Activated CD4-positive, alpha-beta T cell treated with anti-CD3 and anti-CD28 coated beads for 36 hours (primary cell): ENCODE measurements at regions of chrX and their contacts with region 1.

Region 1: DNA sequence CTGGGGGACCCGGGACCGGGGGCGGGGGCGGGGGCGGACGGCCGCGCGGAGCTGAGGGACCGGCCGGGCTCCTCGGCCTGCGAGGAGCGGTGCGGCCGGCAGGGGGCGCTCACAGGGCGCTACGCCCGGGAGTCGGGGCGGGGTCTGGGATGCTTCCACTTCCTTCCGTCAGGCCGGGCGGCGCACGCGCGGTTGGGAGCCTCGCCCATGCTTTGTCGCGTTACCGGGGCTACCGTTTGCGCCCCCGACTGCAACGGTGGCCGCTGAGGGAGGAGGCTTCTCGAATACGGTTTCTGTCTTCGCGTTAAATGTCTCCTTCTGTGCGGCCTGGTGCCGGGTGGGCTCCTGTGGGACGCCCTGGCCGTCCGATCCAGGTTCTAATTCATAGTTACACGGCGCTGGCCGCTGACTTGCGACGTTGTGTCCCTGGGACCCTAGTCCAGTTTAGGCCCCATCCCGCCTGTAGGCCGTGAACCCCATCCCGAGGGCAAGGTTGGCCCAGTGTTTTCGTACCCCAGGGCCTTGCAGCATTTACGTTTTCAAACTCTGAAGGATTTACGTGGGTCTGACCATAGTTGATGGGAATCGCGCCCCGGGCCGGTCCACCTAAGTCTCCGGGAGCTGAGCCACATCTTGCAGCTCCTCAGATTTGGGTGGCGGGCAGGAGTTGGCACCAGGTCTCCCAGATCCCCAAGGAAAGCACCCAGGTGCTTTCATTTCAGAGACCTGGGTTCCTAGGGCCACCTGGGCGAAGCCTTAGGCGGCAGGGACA is 549 bp downstream of the MSL3 start:
- DNase-seq: peak; percentile 93
- ATAC-seq: peak; percentile 57
- H3K4me3 Mint-ChIP-seq: peak overlapping the region; percentile 94
- H3K27ac Mint-ChIP-seq: peak overlapping the region; percentile 96
- H3K4me1 Mint-ChIP-seq: peaks cover 14% of the 10 kb centered on the region
- H3K27me3 Mint-ChIP-seq: no peaks in the 10 kb centered on the region

Region 2: DNA sequence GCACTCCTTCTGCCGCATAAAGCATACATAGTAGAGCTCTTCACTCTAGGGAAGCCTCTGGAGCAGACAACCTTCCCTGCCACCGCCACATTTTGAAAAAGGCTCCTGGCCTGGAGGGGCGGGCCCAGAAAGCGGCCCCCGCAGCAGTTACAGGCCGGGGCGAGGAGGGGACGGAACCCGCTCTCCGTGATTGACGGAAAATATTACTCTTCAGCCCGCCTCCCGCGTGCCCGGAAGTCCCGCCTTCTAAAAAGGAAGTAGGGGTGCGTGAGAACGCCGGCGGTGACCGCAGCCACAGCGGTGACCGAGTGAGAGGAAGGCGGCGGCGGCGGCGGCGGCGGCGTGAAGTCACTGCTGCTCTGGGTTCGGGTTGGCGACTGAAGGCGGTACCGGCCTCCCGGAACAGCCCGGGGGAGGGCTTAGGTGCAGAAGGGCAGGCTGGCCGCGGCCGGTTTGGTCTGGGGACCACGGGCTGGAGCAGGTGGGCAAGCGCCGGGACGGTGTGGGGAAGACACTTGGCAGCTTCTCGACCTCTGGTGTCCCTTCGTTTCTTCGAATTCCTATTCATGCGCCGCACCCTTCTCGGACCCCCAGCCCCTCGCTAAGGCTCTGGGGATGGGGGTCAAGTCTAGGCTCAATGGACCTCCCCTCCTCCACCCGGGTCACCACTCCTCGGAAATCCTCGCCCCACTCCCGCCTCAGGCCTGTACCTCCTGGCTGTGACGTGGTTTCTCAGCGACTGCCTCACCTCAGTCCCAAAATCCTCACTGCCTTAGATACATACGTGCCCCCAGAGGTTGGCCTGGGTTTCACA is 647.3 kb before region 1 on chrX and contains the start of gene HCCS:
- CTCF ChIA-PET with region 1: no interaction called
- POLR2A ChIA-PET with region 1: no interaction called
- intact Hi-C with region 1: loop called (anchors 2 to 5 kb)
- DNase-seq: peak; percentile 88
- ATAC-seq: peak; percentile 92
- H3K4me3 Mint-ChIP-seq: no peak within 1 kb of the TSS
- H3K27ac Mint-ChIP-seq: peak within 1 kb of the TSS; percentile 95
- H3K4me1 Mint-ChIP-seq: peaks cover 22% of the 10 kb centered on the region
- H3K27me3 Mint-ChIP-seq: no peaks in the 10 kb centered on the region
- total RNA-seq, gene HCCS: 24.4 to 24.7 TPM

Region 3: GRCh38 chrX:11787564-11787963 is 29.0 kb after region 1 on chrX:
- CTCF ChIA-PET with region 1: interaction called, 3 read pairs
- POLR2A ChIA-PET with region 1: no interaction called
- intact Hi-C with region 1: loop called in 1 of 2 experiments (anchors 1 kb)
- DNase-seq: peak; percentile 85
- ATAC-seq: peak; percentile 84
- H3K4me3 Mint-ChIP-seq: peak overlapping the region; percentile 54
- H3K27ac Mint-ChIP-seq: no peak overlapping the region
- H3K4me1 Mint-ChIP-seq: peaks cover 31% of the 10 kb centered on the region
- H3K27me3 Mint-ChIP-seq: no peaks in the 10 kb centered on the region

Region 4: DNA sequence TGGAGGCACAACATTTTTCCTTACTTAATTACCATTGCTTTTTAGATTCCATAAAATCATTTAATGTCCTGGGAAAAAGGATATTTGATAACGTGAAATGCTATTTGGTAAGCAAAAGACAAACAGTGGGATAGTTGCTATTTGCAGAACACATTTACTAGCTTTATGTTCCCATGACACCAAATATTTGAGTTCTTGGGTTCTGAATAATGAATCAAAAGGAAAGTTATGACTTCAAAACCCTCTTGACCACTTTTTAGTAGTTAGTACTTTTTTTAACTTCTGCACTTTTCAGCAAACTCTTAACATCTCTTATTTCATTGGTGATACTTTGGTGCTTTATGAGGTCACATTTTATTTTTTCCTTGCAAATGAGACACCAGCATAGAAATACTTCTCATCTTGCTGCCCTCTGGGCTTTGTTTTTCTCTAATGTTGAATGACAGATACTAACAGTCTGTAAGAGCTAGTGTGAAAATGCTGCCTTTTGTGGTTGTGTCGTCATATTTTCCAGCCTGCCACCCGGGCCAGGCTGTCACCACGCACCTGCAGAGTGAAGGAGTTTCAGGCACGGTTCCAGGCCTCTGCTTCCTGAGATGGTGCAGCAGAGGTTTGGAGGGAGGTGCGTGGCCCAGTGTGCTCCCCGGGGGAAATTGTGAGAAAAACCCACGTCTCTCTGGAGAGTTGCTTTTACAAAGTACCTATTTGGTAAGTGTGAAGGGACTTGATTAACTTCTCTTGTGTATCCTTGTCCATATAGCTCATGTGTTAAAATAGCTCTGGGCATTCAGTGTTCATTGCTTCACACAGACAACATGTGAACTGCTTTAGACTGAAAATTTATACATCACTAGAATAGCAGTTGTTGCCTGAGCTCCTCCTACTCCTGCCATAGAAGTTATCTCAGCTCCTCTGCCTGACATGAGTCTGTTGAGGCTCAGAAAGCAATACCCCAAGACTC is 34.2 kb after region 1 on chrX:
- CTCF ChIA-PET with region 1: interaction called, 3 read pairs
- POLR2A ChIA-PET with region 1: no interaction called
- intact Hi-C with region 1: loop called in 1 of 2 experiments (anchors 1 kb)
- DNase-seq: peak; percentile 83
- ATAC-seq: peak; percentile 92
- H3K4me3 Mint-ChIP-seq: peak overlapping the region; percentile 37
- H3K27ac Mint-ChIP-seq: peak overlapping the region; percentile 91
- H3K4me1 Mint-ChIP-seq: peaks cover 34% of the 10 kb centered on the region
- H3K27me3 Mint-ChIP-seq: no peaks in the 10 kb centered on the region